Cardiac septum (tissue), 1 donor: ENCODE measurements at regions of chr17 and their contacts with region 1.

Region 1: GRCh38 chr17:79923974-79924638 is 84.9 kb upstream of the CBX4 start:
- DNase-seq: no peak

Region 2: DNA sequence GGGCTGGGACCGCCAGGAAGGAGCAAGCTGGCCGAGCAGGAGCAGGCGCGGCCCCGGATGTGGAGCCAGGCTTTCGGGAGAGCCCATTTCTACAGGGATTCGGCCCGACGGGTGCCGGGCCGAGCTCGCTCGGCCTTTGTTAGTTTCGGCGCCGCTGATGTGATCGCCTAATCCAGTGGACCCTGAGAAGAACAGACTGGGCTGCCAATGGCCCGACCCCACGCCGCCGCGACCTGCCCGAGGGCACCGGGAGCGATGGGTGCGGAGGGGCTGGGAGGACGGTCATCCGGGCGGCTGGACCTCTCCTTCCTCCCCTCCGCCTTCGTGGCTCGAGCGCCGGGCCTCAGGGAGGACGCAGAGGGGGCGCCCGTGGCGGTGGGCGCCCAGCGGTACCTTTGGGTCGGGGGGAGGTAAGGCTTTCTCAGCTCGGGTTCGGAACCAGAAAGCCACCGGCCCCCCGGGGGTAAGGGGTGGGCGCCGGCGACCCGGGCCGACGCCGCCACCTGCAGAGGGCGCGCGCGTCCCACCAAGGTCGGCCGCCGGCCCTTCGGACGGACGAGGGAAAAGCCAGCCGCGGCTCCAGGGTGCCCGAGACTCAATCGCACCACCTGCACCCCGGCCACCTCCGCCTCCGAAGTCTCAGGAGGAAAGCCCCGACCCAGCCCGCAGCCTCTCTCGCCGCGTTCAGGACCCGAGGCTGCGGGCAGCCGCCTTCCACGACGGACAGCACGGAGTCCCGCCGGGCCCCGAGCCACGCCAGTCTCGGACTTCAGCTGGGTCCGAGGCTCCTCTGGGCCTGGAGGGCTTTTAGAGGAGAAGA is 134.4 kb before region 1 on chr17:
- intact Hi-C with region 1: loop called (anchors 5 kb)
- DNase-seq: no peak

Region 3: GRCh38 chr17:79902146-79902791 is 21.8 kb before region 1 on chr17:
- intact Hi-C with region 1: no loop called
- DNase-seq: no peak

Region 4: DNA sequence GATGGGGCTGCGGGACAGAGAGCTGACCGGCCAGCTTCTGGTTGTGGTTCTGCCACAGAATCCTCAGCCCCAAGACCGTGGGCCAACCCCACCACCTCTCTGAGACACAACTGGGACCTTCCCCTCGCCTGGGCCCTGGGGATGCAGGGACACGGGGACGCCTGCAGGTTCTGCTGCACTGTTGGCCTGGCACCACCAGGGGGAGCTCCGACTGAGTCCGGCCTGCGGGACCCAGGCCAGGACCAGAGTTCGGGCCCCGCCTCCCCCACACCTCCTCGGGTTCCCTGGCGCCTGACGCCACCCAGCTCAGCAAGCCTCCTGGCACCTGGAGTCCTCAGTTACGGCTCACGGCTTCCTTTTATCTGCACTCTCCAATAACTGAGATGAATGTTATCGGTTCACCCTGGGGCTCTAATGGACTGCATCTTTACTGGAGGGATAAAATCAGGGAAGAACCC is 84.3 kb after region 1 on chr17:
- intact Hi-C with region 1: no loop called
- DNase-seq: peak; percentile 91

Region 5: GRCh38 chr17:80029258-80029974 is 105.3 kb after region 1 on chr17:
- intact Hi-C with region 1: no loop called
- DNase-seq: no peak